ENCODE measurements at regions of chr19 and their contacts with region 1.

Region 1: DNA sequence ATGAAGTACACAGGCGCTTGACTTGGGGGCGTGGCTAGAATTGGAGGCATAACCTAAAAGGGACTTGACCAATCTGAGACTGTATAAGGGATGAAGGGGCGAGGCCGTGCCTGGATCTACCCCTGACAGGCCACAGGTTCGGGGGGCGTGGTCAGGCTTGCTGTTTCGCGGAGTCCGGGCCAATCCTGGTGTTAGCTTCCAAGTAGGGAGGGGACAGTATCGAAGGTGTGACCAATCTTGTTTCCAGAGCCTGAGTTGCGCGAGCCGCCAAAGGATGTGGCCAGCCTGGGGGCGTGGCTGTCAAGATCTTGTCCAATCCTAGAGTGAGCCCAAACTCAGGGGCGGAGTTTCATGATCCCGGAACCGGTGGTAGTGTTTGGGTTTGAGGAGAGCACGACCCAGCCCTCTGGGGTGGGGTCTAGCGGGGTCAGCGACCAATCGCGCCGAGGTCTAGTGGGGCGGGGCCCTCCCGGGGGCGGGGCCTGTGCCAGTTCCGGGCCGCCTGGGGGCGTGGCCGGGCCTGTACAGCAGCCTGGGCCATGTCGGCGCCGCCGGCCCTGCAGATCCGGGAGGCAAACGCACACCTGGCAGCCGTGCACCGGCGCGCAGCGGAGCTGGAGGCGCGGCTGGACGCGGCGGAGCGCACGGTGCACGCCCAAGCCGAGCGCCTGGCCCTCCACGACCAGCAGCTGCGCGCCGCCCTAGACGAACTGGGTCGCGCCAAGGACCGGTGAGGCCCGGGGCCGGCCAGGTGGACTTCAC is at the start of gene VMAC:
- DNase-seq: peak; percentile 100
- H3K4me3 ChIP-seq: peak within 1 kb of the TSS; percentile 97
- H3K4me3 Mint-ChIP-seq: peak within 1 kb of the TSS; percentile 91 to 97 (median 95)
- H3K27ac ChIP-seq: peak within 1 kb of the TSS; percentile 95
- H3K27ac Mint-ChIP-seq: peak within 1 kb of the TSS; percentile 95 to 100 (median 100)
- H3K4me1 ChIP-seq: peaks cover 37% of the 10 kb centered on the region
- H3K4me1 Mint-ChIP-seq: peaks cover 14 to 57% (median 35%) of the 10 kb centered on the region in 4 donors
- H3K27me3 ChIP-seq: no peaks in the 10 kb centered on the region
- H3K27me3 Mint-ChIP-seq: no peaks in the 10 kb centered on the region
- total RNA-seq, gene VMAC: 36.6 to 37.5 TPM

Region 2: GRCh38 chr19:5622463-5623396 is 281.8 kb before region 1 on chr19 and contains the starts of genes SAFB and SAFB2:
- CTCF ChIA-PET with region 1: no interaction called
- POLR2A ChIA-PET with region 1: interaction called, 14 read pairs
- intact Hi-C with region 1: no loop called
- DNase-seq: peak; percentile 99 to 100 (median 100)
- H3K4me3 ChIP-seq: peak within 1 kb of the TSS; percentile 80 to 82
- H3K4me3 Mint-ChIP-seq: peak within 1 kb of the TSS; percentile 99 to 100 (median 100)
- H3K27ac ChIP-seq: peak within 1 kb of the TSS; percentile 97
- H3K27ac Mint-ChIP-seq: peak within 1 kb of the TSS; percentile 97 to 100 (median 100)
- H3K4me1 ChIP-seq: peaks cover 73% of the 10 kb centered on the region
- H3K4me1 Mint-ChIP-seq: peaks cover 43 to 88% (median 69%) of the 10 kb centered on the region in 4 donors
- H3K27me3 ChIP-seq: no peaks in the 10 kb centered on the region
- H3K27me3 Mint-ChIP-seq: no peaks in the 10 kb centered on the region
- total RNA-seq, gene SAFB: 202 to 211 TPM
- total RNA-seq, gene SAFB2: 257 to 263 TPM

Region 3: DNA sequence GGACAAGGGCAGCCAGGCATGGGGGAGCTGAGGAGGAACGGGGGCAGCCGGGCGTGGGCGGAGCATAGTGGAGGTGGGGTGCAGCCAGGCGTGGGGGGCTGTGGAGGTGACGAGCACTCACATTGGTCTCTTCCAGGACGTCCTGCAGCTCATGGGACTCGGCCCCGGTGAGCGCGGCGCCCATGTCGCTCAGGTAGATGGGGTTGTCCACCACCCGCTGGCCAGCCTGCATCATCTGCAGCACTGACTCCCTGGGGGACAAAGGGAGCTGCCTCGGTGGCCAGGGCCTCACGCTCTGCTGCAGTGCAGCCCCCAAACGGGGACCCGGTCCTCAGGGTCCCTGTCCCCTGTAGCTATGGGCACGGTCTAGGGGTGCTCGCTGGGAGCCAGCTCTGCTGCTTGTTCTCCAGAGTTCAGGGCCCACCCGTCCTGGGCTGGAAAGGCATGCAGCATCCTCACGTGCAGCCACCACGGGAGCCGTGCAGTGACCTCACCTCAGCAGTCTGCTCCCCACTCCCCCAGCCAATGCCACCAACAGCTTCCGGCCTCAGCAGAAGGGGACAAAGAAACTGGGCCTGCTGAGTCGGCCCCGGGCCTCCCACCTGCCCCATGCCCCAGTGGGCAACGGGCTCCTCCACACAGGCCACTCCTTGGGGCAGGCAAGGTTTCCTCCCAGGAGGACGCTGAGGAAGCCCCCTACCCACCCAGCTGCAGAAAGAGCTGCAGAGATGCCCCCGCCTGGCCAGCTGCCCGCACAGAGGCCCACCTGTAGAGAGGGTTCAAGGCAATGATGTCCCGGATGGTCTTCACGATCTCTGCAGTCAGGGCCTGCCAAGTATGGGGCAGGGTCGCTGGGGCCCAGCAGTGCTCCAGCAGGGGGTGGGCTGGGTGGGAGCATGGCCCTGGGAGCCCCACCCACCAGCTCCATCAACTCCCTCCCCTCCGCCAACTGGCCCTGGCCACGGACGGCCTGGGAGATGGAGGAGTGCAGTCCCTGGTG is 196.7 kb before region 1 on chr19:
- CTCF ChIA-PET with region 1: no interaction called
- POLR2A ChIA-PET with region 1: no interaction called
- intact Hi-C with region 1: no loop called
- DNase-seq: no peak
- H3K4me3 ChIP-seq: no peak overlapping the region
- H3K4me3 Mint-ChIP-seq: no peak overlapping the region
- H3K27ac ChIP-seq: no peak overlapping the region
- H3K27ac Mint-ChIP-seq: no peak overlapping the region
- H3K4me1 ChIP-seq: no peaks in the 10 kb centered on the region
- H3K4me1 Mint-ChIP-seq: no peaks in the 10 kb centered on the region
- H3K27me3 ChIP-seq: no peaks in the 10 kb centered on the region
- H3K27me3 Mint-ChIP-seq: no peaks in the 10 kb centered on the region

Region 4: DNA sequence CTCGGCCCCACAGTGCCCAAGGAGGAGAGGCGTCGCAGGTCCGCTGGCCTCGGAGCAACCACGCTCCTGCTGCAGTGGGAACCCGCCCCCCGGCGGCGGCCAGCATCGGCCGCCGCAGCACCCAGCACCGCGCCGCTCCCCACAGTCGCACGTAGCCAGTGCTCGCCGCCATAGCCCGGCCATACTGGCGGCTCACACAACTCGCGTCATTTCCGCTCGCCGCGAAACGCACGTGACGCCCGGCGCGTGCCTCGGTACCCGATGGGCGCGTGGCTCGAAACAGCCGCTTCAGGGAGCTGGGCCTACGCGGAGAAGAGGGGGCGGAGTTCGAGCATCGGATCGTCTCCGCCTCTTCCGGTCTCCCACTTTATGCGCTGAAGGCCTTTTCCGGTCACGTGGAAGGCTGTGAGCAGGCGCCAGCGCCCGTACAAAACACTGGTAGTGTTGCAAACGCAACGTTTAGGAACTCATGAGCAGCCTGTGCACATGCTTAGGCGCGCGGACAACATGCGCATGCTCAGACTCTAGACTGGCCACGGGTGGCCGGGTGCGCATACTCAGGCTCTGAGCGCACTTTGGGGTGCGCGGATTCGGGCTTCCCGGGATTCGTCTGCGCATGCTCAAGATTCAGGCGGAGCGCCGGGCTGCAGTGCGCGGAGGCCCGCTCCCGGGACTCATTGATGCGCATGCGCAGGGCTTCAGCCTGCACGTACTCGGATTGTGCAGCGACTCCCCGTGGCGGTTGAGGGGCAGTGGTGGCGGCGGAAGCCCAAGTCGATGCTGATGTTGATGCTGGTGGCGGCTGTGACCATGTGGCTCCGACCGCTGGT is 184.4 kb before region 1 on chr19 and contains the starts of genes CATSPERD and LONP1:
- CTCF ChIA-PET with region 1: no interaction called
- POLR2A ChIA-PET with region 1: interaction called, 5 read pairs
- intact Hi-C with region 1: loop called (anchors 1 kb)
- DNase-seq: peak; percentile 98 to 99 (median 99)
- H3K4me3 ChIP-seq: peak within 1 kb of the TSS; percentile 87 to 92
- H3K4me3 Mint-ChIP-seq: peak within 1 kb of the TSS; percentile 90 to 97 (median 90)
- H3K27ac ChIP-seq: peak within 1 kb of the TSS; percentile 89
- H3K27ac Mint-ChIP-seq: peak within 1 kb of the TSS; percentile 94 to 99 (median 97)
- H3K4me1 ChIP-seq: peaks cover 23% of the 10 kb centered on the region
- H3K4me1 Mint-ChIP-seq: peaks cover 20 to 37% (median 27%) of the 10 kb centered on the region in 4 donors
- H3K27me3 ChIP-seq: no peaks in the 10 kb centered on the region
- H3K27me3 Mint-ChIP-seq: peaks cover 0 to 6% of the 10 kb centered on the region in 2 donors
- total RNA-seq, gene CATSPERD: not detected
- total RNA-seq, gene LONP1: 59.6 to 64.7 TPM

Region 5: DNA sequence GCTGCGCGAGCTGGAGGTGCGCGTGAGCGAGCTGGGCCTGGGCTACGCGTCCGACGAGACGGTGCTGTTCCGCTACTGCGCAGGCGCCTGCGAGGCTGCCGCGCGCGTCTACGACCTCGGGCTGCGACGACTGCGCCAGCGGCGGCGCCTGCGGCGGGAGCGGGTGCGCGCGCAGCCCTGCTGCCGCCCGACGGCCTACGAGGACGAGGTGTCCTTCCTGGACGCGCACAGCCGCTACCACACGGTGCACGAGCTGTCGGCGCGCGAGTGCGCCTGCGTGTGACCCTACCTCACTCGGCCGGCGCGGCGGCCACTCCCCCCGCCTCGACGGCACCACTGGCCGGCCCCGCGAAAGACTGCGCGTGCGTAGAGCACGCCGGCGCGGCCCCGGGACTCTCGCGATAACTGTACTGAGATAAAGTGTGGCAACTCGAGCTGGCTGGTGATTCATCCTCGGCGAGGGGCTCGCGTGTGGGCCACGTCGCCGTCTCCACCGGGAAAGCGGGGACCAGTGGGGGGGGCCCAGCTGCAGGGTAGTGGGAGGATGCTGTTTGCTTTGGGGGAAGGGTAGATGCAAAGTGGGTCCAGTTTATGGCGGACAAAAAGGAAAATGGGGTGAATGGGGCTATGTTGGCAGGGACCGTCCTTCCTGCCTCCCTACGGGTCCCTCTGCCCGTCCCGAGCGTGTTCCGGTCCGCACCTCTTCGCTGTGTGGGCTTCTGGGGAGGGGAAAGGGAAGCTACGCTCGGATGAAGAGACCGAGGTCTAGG is 76.5 kb before region 1 on chr19:
- CTCF ChIA-PET with region 1: interaction called, 5 read pairs
- POLR2A ChIA-PET with region 1: interaction called, 54 read pairs
- intact Hi-C with region 1: loop called (anchors 1 kb)
- DNase-seq: peak; percentile 91 to 96 (median 92)
- H3K4me3 ChIP-seq: peak overlapping the region; percentile 68 to 73
- H3K4me3 Mint-ChIP-seq: peak overlapping the region; percentile 92 to 99 (median 96)
- H3K27ac ChIP-seq: peak overlapping the region; percentile 49
- H3K27ac Mint-ChIP-seq: peak overlapping the region; percentile 95 to 97 (median 95)
- H3K4me1 ChIP-seq: peaks cover 22% of the 10 kb centered on the region
- H3K4me1 Mint-ChIP-seq: peaks cover 3 to 17% (median 10%) of the 10 kb centered on the region in 4 donors
- H3K27me3 ChIP-seq: no peaks in the 10 kb centered on the region
- H3K27me3 Mint-ChIP-seq: peaks cover 0 to 3% of the 10 kb centered on the region in 2 donors

Region 6: GRCh38 chr19:5961969-5962945 is 57.7 kb after region 1 on chr19:
- CTCF ChIA-PET with region 1: interaction called, 14 read pairs
- POLR2A ChIA-PET with region 1: interaction called, 72 read pairs
- intact Hi-C with region 1: loop called (anchors 1 kb)
- DNase-seq: peak; percentile 84 to 93 (median 88)
- H3K4me3 ChIP-seq: peak overlapping the region; percentile 11 to 42
- H3K4me3 Mint-ChIP-seq: peak overlapping the region; percentile 60 to 97 (median 82)
- H3K27ac ChIP-seq: peak overlapping the region; percentile 78
- H3K27ac Mint-ChIP-seq: peak overlapping the region; percentile 89 to 100 (median 99)
- H3K4me1 ChIP-seq: peaks cover 95% of the 10 kb centered on the region
- H3K4me1 Mint-ChIP-seq: peaks cover 53 to 99% (median 82%) of the 10 kb centered on the region in 4 donors
- H3K27me3 ChIP-seq: no peaks in the 10 kb centered on the region
- H3K27me3 Mint-ChIP-seq: no peaks in the 10 kb centered on the region

Region 7: GRCh38 chr19:6038634-6039405 is 134.3 kb after region 1 on chr19:
- CTCF ChIA-PET with region 1: no interaction called
- POLR2A ChIA-PET with region 1: no interaction called
- intact Hi-C with region 1: no loop called
- DNase-seq: no peak
- H3K4me3 ChIP-seq: no peak overlapping the region
- H3K4me3 Mint-ChIP-seq: no peak overlapping the region
- H3K27ac ChIP-seq: no peak overlapping the region
- H3K27ac Mint-ChIP-seq: peak overlapping the region in 1 of 7 donors; percentile 0
- H3K4me1 ChIP-seq: no peaks in the 10 kb centered on the region
- H3K4me1 Mint-ChIP-seq: peaks cover 0 to 4% (median 2%) of the 10 kb centered on the region in 4 donors
- H3K27me3 ChIP-seq: no peaks in the 10 kb centered on the region
- H3K27me3 Mint-ChIP-seq: no peaks in the 10 kb centered on the region

Region 8: DNA sequence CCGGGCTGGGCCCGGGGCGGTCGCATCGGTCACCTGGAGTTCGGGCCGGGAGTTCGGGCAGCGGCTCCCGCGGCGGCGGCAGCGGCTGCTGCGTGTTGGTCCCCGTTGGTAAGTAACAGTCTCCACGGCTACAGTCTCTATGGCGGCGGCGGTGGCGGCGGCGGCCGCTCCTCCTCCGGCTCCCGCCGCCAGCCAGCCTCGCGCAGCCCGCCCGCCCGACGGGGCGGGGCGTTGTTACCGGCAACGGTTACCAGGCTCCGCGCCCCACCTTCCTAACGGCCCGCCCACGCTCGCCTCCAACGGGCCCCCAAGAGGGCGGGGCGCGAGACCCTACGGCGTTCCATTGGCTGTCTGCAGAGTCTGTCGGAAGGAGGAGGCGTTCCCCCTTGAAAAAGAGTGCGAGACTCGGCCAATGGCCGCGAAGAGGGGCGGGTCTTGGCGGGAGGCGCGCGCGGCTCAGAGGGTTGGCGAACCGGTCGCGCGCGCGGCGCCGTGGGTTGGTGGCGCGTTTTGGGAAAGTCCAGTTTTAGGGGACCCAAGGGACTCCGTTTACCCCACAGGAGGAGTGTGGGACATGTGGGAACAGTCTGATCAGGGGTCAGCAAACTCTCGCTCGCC is 205.9 kb after region 1 on chr19 and contains the start of gene RFX2:
- CTCF ChIA-PET with region 1: no interaction called
- POLR2A ChIA-PET with region 1: interaction called, 9 read pairs
- intact Hi-C with region 1: loop called (anchors 2 kb)
- DNase-seq: peak; percentile 99 to 100 (median 99)
- H3K4me3 ChIP-seq: peak within 1 kb of the TSS; percentile 52 to 55
- H3K4me3 Mint-ChIP-seq: peak within 1 kb of the TSS; percentile 90 to 97 (median 94)
- H3K27ac ChIP-seq: peak within 1 kb of the TSS; percentile 43
- H3K27ac Mint-ChIP-seq: peak within 1 kb of the TSS; percentile 93 to 97 (median 95)
- H3K4me1 ChIP-seq: peaks cover 27% of the 10 kb centered on the region
- H3K4me1 Mint-ChIP-seq: peaks cover 11 to 26% (median 23%) of the 10 kb centered on the region in 4 donors
- H3K27me3 ChIP-seq: peaks cover 4% of the 10 kb centered on the region
- H3K27me3 Mint-ChIP-seq: peaks cover 2 to 7% of the 10 kb centered on the region in 2 donors
- total RNA-seq, gene RFX2: 5.6 to 6.7 TPM

Measured in CD4-positive, alpha-beta memory T cell (primary cell).